GM10248 (cell line): ENCODE measurements at regions of chr16 and their contacts with region 1.

Region 1: DNA sequence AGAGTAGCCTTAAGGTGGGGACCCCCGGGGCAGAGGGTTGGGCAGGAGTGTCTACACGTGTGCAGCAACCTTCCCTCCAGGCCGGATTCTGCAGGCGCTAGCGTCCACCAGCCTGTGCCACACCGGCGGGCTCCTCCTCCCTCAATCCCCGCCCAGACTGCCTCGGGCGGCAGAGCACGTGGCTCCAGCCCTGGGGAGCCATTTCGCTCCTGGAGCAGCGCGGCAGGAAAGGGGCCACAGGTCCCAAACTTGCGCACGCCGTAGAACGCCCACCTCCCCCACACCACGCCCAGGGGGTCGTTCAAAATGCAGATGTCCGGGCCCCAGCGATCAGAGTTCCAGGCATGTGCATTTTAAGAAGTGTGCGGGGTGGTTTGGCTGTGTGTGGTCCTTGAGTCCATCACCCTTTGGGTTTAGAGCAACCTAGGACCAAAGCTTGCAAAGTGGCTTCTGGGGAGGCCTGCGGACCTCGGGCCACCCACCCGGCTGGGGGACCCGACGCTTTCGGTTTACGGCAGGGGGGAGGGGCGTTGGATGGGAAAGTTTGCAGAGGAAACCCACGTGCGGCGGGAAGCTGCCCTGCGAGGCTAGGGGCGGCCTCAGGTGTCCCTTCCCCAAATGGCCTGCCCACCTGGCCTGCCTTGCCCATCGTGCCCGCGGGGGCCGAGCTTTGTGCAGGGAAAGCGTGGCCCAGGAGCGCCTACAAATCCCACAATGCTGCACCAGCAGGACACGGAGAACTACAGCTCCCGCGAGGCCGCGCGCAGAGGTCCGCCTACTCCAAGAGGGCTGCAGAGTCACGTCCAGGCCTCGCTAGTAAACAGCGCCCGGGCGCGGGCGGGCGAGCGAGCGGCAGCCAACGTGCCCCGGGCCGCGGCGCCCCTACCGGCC is 1.4 kb downstream of the TFAP4 start:
- DNase-seq: peak; percentile 93
- CTCF ChIP-seq: peak; percentile 20

Region 2: DNA sequence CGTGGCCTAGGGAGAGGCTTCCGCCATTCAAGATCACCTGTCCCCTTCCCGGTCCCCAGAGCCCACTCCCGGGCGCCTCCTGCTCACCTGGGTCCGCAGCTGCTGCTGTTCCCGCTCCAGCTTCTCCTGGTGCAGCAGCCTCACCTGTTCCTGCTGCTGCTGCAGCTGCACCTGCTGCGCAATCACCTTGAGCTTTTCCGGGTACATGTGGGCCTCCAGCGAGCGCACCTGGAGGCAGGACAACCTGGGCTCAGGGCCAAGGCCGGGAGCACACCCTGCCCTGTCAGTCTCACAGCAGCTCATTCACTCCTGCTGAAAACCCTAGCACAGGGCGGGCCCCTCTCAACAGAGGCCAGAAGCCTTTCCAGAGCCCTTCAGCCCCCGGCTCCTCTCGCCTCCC is 11.1 kb before region 1 on chr16:
- CTCF ChIA-PET with region 1: interaction called, 103 read pairs
- POLR2A ChIA-PET with region 1: interaction called, 7 read pairs
- DNase-seq: no peak
- CTCF ChIP-seq: no peak

Region 3: GRCh38 chr16:4288148-4288921 is 16.9 kb after region 1 on chr16:
- CTCF ChIA-PET with region 1: interaction called, 20 read pairs
- POLR2A ChIA-PET with region 1: no interaction called
- DNase-seq: peak; percentile 94
- CTCF ChIP-seq: peak; percentile 99

Region 4: DNA sequence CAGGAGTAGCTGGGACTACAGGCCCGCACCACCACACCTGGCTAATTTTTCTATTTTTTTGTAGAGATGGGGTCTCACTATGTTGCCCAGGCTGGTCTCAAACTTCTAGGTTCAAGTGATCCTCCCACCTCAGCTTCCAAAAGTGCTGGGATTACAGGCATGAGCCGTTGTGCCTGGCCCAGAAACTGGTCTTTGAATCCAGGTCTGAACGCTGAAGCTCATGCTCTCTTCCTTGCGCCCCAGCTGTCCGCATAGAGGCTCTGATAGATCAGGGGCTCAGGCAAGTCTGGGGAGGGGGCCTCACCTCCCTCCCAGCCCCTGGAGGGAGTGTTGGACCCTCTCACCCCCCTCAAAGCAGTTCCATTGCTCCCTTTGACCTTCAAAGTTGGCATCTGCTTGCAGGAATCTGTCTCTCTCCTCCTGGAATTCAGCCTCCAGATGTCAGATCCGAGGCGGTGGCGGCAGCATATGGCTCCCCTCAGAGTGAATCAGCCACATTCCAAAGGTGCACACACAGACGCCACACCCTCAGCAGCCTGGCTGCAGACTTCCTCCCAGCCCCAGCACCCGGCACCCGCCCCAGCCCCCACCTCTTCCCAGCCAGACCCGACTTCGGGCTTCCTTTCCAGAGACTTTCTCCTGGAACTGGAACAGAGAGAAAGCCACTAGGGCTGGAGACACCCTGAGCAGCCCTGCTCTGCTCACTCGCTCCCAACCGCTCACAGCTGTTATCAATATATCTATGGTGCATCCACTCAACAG is 27.5 kb after region 1 on chr16:
- CTCF ChIA-PET with region 1: interaction called, 10 read pairs
- POLR2A ChIA-PET with region 1: no interaction called
- DNase-seq: no peak
- CTCF ChIP-seq: no peak

Region 5: GRCh38 chr16:4307215-4308037 is 36.0 kb after region 1 on chr16:
- CTCF ChIA-PET with region 1: interaction called, 12 read pairs
- POLR2A ChIA-PET with region 1: interaction called, 3 read pairs
- DNase-seq: peak; percentile 99
- CTCF ChIP-seq: peak; percentile 1